CD8-positive, alpha-beta T cell (primary cell): ENCODE measurements at regions of chr19 and their contacts with region 1.

Region 1: DNA sequence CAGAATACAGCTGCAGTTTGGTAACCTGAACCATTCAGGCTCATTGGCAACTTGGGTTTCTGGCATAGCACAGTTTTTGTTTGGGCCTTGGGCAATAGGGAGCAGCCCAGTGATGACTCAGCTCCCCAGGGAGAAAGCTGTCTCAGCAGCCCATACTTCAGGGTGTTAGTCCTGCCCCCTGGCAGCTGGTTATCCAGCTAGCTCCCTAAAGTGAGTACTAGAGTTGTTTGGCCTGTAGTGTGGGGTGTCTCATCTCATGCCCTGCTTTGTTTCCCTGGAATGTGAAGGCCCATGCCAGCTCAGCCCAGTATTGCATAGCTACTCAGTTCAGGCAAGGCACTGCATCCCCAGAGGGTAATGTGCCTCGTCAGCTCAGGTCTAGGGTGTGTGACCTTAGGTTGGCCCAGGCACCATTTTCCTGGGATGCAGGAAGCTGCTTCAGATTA is 18.2 kb upstream of the ZNF543 start:
- DNase-seq: no peak
- ATAC-seq: no peak
- H3K4me3 ChIP-seq: no peak overlapping the region
- H3K4me3 Mint-ChIP-seq: no peak overlapping the region
- H3K27ac ChIP-seq: no peak overlapping the region
- H3K27ac Mint-ChIP-seq: no peak overlapping the region
- H3K4me1 ChIP-seq: no peaks in the 10 kb centered on the region
- H3K4me1 Mint-ChIP-seq: peaks cover 18% of the 10 kb centered on the region
- H3K27me3 ChIP-seq: no peaks in the 10 kb centered on the region
- H3K27me3 Mint-ChIP-seq: no peaks in the 10 kb centered on the region
- CTCF ChIP-seq: no peak

Region 2: GRCh38 chr19:57377498-57378146 is 75.6 kb after region 1 on chr19:
- CTCF ChIA-PET with region 1: interaction called, 3 read pairs
- POLR2A ChIA-PET with region 1: no interaction called
- intact Hi-C with region 1: loop called in 1 of 2 experiments (anchors 2 kb)
- DNase-seq: no peak
- ATAC-seq: no peak
- H3K4me3 ChIP-seq: no peak overlapping the region
- H3K4me3 Mint-ChIP-seq: no peak overlapping the region
- H3K27ac ChIP-seq: no peak overlapping the region
- H3K27ac Mint-ChIP-seq: no peak overlapping the region
- H3K4me1 ChIP-seq: no peaks in the 10 kb centered on the region
- H3K4me1 Mint-ChIP-seq: no peaks in the 10 kb centered on the region
- H3K27me3 ChIP-seq: no peaks in the 10 kb centered on the region
- H3K27me3 Mint-ChIP-seq: no peaks in the 10 kb centered on the region
- CTCF ChIP-seq: no peak